ENCODE measurements at regions of chr2 and their contacts with region 1.

Region 1: DNA sequence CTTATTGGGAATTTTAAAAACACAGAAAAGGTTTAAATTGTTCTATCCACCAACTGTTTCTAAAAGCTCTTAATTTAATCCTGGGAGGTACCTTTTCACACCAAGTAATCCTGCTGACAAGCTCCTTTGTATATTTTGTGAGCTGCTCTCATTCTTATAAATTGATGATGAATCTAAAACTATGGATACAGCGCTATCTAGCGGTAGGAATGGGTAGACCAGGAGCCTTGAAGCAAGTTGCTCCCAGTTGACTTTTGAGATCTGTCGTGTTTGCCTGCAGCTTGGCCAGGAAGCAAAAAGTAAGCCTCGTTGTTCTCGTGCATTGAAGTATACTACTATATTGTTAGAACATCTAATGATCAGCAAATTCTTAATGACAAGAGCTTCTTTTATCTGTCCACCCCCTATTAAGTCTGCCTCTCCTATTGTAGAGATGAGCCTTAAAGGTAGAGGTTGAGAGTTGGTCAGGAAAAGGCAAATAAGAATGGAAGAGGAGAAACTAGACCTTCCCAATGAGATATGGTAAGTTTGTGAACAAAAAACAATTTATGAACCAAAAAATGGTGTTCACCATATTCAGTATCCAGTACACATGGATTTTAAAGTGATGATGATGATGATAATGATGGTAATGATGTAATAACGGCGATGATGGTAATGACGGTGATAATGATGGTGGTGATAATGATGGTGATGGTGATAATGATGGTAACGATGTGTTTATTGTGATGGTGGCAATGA is 212.0 kb upstream of the NCKAP5 start:
- DNase-seq: peak; percentile 76
- H3K4me3 Mint-ChIP-seq: no peak overlapping the region
- H3K27ac Mint-ChIP-seq: no peak overlapping the region
- H3K4me1 Mint-ChIP-seq: no peaks in the 10 kb centered on the region
- H3K27me3 Mint-ChIP-seq: no peaks in the 10 kb centered on the region
- CTCF ChIP-seq: peak; percentile 62

Region 2: GRCh38 chr2:133266041-133266925 is 514.0 kb before region 1 on chr2:
- CTCF ChIA-PET with region 1: interaction called, 4 read pairs
- intact Hi-C with region 1: loop called (anchors 5 kb)
- DNase-seq: peak; percentile 15
- H3K4me3 Mint-ChIP-seq: peak overlapping the region; percentile 83
- H3K27ac Mint-ChIP-seq: peak overlapping the region; percentile 60
- H3K4me1 Mint-ChIP-seq: peaks cover 24% of the 10 kb centered on the region
- H3K27me3 Mint-ChIP-seq: peaks cover 22% of the 10 kb centered on the region
- CTCF ChIP-seq: no peak

Region 3: DNA sequence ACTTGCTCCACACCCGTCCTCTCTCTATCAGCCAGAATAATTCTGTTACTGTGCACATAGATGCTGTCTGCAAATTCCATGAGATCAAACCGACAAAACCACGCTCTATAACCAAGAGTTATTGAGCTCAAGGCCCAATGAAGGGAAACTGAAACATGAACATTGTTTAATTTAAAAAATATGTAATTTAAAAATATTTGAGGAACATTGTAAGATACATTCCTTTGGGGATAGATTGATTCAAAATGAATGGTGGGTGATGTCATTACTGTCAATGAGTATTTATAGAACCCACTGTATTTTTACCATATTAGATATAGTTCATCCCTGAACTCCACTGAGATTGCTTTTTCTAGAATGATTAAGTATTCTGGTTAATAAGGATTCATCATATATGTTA is 262.4 kb before region 1 on chr2:
- CTCF ChIA-PET with region 1: interaction called, 22 read pairs
- intact Hi-C with region 1: no loop called
- DNase-seq: no peak
- H3K4me3 Mint-ChIP-seq: no peak overlapping the region
- H3K27ac Mint-ChIP-seq: no peak overlapping the region
- H3K4me1 Mint-ChIP-seq: no peaks in the 10 kb centered on the region
- H3K27me3 Mint-ChIP-seq: peaks cover 7% of the 10 kb centered on the region
- CTCF ChIP-seq: no peak

Region 4: GRCh38 chr2:133526530-133527300 is 253.6 kb before region 1 on chr2:
- CTCF ChIA-PET with region 1: no interaction called
- intact Hi-C with region 1: loop called (anchors 5 kb)
- DNase-seq: no peak
- H3K4me3 Mint-ChIP-seq: no peak overlapping the region
- H3K27ac Mint-ChIP-seq: no peak overlapping the region
- H3K4me1 Mint-ChIP-seq: no peaks in the 10 kb centered on the region
- H3K27me3 Mint-ChIP-seq: no peaks in the 10 kb centered on the region
- CTCF ChIP-seq: no peak

Region 5: GRCh38 chr2:133568172-133568571 is 212.1 kb before region 1 on chr2 and contains the start of gene NCKAP5:
- CTCF ChIA-PET with region 1: interaction called, 8 read pairs
- intact Hi-C with region 1: loop called (anchors 5 kb)
- DNase-seq: no peak
- H3K4me3 Mint-ChIP-seq: peak within 1 kb of the TSS; percentile 54
- H3K27ac Mint-ChIP-seq: peak within 1 kb of the TSS; percentile 10
- H3K4me1 Mint-ChIP-seq: peaks cover 46% of the 10 kb centered on the region
- H3K27me3 Mint-ChIP-seq: no peaks in the 10 kb centered on the region
- CTCF ChIP-seq: no peak
- total RNA-seq, gene NCKAP5: 1.2 and 2.2 TPM in 2 replicates

Region 6: DNA sequence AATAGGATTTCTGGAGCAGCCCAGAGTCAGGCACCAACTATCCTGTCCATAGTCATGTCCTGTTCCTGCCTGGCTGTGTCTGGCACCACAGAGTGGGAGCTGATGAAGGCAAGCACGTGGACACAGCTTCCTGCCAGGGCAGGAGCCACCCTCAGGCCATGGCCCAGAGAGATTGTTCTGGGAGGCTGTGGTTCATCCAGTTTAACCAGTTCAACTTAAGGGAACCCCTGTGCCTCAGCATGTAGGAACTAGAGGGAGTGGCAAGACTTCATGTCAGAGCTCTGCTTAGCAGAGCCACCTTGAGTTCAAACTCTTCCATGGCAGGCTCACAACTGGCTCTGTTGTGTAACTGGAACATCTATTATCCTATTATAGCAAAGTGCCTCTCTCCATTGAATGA is 138.8 kb before region 1 on chr2:
- CTCF ChIA-PET with region 1: no interaction called
- intact Hi-C with region 1: loop called (anchors 2 kb)
- DNase-seq: peak; percentile 81
- H3K4me3 Mint-ChIP-seq: no peak overlapping the region
- H3K27ac Mint-ChIP-seq: peak overlapping the region; percentile 46
- H3K4me1 Mint-ChIP-seq: peaks cover 28% of the 10 kb centered on the region
- H3K27me3 Mint-ChIP-seq: no peaks in the 10 kb centered on the region
- CTCF ChIP-seq: peak; percentile 21

Region 7: DNA sequence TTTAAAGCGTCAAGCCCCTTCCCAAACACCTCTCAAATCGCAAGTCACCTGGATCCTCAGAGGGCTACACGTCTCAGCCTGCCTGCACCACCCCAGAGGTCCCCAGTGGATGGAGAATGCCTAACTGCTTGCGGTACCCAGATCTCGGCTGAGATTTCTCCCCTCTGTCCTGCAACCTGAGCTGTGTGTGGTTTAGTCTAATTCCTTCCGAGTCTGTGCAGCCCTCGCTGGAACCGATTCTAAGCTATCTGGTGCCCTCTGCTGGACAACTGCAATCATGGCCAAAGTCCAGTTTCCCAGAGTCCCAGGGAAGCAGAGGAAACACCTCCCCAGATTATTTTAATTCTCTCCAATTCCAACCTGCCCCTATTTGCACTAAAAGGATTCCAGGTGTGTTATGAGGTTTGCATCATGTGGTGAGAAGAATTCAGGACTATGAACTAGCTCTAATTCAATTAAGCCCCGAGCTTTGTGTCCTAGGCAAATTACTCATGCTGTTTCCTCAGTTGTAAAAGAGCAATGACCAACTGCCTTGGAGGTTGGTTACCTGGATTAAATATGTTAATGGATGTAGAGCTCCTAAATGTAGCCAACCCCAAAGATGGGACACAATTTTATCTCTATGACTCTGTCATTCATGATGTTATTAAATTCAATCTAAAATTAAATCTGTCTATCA is 64.1 kb after region 1 on chr2:
- CTCF ChIA-PET with region 1: interaction called, 16 read pairs
- intact Hi-C with region 1: loop called (anchors 5 kb)
- DNase-seq: peak; percentile 77
- H3K4me3 Mint-ChIP-seq: no peak overlapping the region
- H3K27ac Mint-ChIP-seq: no peak overlapping the region
- H3K4me1 Mint-ChIP-seq: peaks cover 29% of the 10 kb centered on the region
- H3K27me3 Mint-ChIP-seq: no peaks in the 10 kb centered on the region
- CTCF ChIP-seq: peak; percentile 82